ENCODE measurements at regions of chr18 and their contacts with region 1.

Region 1: DNA sequence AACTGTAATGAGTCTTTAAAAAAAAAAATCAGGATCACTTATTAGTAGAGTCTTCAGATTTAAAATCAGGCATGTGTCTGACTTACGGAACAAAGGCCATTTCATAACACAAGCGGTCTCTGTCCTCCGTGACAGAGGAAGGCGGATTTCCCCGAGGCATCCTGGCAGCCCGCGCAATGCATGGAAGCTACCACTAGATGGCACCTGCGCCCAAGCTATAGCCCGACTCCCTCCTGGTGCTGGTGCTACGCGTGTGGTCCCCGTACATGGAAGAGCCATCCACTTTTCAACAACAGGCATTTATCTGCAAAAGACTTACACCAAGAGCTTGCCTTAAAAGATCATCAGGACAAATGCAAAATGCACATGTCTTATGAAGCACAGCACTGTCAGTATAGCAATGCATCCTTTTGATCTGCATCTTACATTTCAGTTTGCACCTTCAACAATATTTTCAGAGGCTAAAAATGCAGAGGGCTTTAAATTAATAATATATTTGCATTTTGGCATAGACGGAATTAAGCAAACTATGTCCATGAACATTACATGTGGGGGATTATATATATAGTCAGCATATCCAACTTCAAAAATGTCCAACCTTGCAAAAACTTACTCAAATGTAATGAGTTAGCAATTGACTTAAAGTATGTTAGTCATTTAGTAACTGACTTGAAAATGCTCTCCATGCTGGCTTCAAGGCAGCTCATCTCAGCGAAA is 96.0 kb downstream of the ZNF516 start:
- DNase-seq: peak; percentile 75 to 94 (median 86)
- ATAC-seq: peak; percentile 97
- H3K4me3 ChIP-seq: no peak overlapping the region
- H3K27ac ChIP-seq: no peak overlapping the region
- H3K4me1 ChIP-seq: peaks cover 0 to 54% of the 10 kb centered on the region in 2 donors
- H3K27me3 ChIP-seq: no peaks in the 10 kb centered on the region
- CTCF ChIP-seq: peak; percentile 97 to 98

Region 2: DNA sequence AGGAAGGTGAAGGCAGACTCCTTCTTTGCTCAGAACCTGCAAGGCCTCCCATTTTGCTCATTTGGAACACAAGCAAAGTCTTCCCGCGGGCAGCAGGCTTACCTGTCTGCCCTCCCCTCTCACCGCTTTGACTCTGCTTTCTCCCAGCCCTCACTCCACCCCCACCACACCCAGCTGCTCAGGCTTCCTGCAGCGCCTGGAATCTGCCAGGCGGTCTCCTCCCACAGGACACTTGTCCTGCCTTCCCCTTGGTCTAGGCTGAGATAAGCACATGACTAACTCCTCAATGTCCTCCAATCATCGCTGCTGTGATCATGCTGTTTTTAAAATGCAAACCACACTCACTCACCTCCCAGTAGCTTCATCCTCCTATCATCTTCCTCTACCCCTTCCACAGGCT is 334.1 kb before region 1 on chr18:
- intact Hi-C with region 1: no loop called
- DNase-seq: no peak
- ATAC-seq: peak; percentile 42
- H3K4me3 ChIP-seq: no peak overlapping the region
- H3K27ac ChIP-seq: no peak overlapping the region
- H3K4me1 ChIP-seq: no peaks in the 10 kb centered on the region
- H3K27me3 ChIP-seq: no peaks in the 10 kb centered on the region
- CTCF ChIP-seq: no peak

Region 3: GRCh38 chr18:76686737-76687262 is 287.7 kb after region 1 on chr18:
- intact Hi-C with region 1: loop called in 1 of 2 experiments (anchors 10 kb)
- DNase-seq: peak; percentile 44 to 72 (median 64)
- ATAC-seq: peak; percentile 96
- H3K4me3 ChIP-seq: no peak overlapping the region
- H3K27ac ChIP-seq: peak overlapping the region in 1 of 2 donors; percentile 53
- H3K4me1 ChIP-seq: peaks cover 0 to 9% of the 10 kb centered on the region in 2 donors
- H3K27me3 ChIP-seq: peaks cover 0 to 36% of the 10 kb centered on the region in 2 donors
- CTCF ChIP-seq: peak; percentile 45 to 59